ENCODE measurements at regions of chr12 and their contacts with region 1.

Region 1: DNA sequence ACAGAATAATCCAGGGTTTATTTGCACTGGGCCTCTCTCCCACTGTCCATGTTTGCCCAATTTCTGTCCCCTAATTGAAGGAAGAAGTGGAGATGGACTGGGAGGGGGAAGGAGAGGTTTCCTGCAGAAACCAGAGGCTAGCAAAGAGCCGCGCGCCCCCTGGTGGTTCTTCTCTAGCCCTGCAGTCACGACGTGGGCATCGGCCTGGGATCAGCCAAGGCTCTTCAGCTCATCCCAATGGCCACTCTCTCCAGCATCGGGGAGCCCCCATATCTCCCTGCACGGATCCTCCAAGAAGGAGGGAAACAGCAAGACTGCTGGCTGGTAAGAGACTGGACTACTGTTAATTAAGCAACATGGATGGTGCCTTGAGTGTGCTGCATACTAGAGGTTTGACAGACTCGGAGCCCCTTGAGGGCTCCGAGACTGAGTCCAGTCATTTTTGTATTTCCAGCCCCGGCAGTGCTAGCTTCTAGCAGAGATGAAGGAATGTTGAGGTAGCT is 18.7 kb downstream of the ZBTB39 start:
- DNase-seq: peak; percentile 53 to 86 (median 68)
- ATAC-seq: peak; percentile 86
- H3K4me3 ChIP-seq: no peak overlapping the region
- H3K4me3 Mint-ChIP-seq: no peak overlapping the region
- H3K27ac ChIP-seq: no peak overlapping the region
- H3K27ac Mint-ChIP-seq: no peak overlapping the region
- H3K4me1 ChIP-seq: peaks cover 18% of the 10 kb centered on the region
- H3K4me1 Mint-ChIP-seq: peaks cover 14% of the 10 kb centered on the region
- H3K27me3 ChIP-seq: no peaks in the 10 kb centered on the region
- H3K27me3 Mint-ChIP-seq: no peaks in the 10 kb centered on the region
- CTCF ChIP-seq: peak; percentile 82

Region 2: DNA sequence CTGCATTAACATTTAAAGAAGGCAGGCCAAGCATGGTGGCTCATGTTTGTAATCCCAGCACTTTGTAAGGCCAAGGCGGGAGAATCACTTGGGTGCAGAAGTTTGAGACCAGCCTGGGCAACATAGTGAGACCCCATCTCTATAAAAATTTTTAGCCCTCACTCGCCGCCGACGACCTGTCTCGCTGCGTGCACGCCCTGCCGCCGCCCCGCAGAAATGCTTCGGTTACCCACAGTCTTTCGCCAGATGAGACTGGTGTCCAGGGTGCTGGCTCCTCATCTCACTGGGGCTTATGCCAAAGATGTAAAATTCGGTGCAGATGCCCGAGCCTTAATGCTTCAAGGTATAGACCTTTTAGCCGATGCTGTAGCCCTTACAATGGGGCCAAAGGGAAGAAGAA is 476.8 kb before region 1 on chr12:
- CTCF ChIA-PET with region 1: no interaction called
- POLR2A ChIA-PET with region 1: no interaction called
- intact Hi-C with region 1: loop called (anchors 2 to 5 kb)
- DNase-seq: no peak
- ATAC-seq: no peak
- H3K4me3 ChIP-seq: no peak overlapping the region
- H3K4me3 Mint-ChIP-seq: no peak overlapping the region
- H3K27ac ChIP-seq: no peak overlapping the region
- H3K27ac Mint-ChIP-seq: no peak overlapping the region
- H3K4me1 ChIP-seq: no peaks in the 10 kb centered on the region
- H3K4me1 Mint-ChIP-seq: peaks cover 5% of the 10 kb centered on the region
- H3K27me3 ChIP-seq: no peaks in the 10 kb centered on the region
- H3K27me3 Mint-ChIP-seq: peaks cover 15% of the 10 kb centered on the region
- CTCF ChIP-seq: no peak

Region 3: DNA sequence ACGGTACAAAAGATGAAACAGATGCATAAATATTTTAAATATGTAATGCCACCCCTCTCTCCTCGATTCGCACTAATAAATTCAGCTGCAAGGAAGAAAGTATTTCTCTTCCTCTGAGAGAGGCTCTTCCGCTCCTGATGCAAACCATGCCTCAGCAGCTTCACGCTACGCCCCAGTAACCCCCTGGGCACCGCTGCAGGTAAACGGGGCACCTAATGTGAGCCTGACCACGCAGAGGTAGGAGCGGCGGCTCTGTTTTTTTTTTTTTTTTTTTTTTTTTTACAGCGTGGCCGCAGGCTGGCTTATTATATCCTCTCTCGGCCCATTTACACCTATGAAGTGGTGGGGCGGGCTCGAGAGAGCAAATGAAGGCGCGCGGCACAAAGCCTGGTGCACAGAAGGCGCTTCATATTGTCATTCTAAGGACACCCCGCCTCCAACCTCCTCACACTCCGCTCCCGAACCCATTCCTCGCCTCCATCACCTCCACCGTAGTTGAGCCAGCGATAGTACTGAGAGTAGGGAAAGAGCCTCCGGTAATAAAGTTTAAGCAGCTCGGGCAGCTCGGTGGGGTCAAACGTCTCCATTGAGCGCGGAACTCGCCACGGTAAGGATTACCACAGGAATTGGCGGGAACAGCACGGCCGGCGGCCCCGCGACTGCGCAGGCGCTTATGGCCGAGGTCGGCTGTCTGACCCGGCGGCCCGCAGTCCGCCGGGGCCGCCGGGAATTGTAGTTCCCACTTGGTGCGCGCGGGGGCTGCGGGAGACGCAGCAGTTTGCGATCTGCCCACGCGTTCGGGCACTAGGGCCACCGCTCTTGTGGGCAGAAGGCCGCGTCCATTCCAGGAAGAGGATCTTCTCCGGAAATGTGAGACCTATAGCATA is 235.6 kb before region 1 on chr12 and contains the start of gene PRIM1:
- CTCF ChIA-PET with region 1: interaction called, 7 read pairs
- POLR2A ChIA-PET with region 1: no interaction called
- intact Hi-C with region 1: loop called (anchors 1 kb)
- DNase-seq: peak; percentile 66 to 91 (median 78)
- ATAC-seq: peak; percentile 80
- H3K4me3 ChIP-seq: peak within 1 kb of the TSS; percentile 96
- H3K4me3 Mint-ChIP-seq: peak within 1 kb of the TSS; percentile 98
- H3K27ac ChIP-seq: peak within 1 kb of the TSS; percentile 68 to 80
- H3K27ac Mint-ChIP-seq: peak within 1 kb of the TSS; percentile 95
- H3K4me1 ChIP-seq: peaks cover 10% of the 10 kb centered on the region
- H3K4me1 Mint-ChIP-seq: peaks cover 33% of the 10 kb centered on the region
- H3K27me3 ChIP-seq: no peaks in the 10 kb centered on the region
- H3K27me3 Mint-ChIP-seq: no peaks in the 10 kb centered on the region
- CTCF ChIP-seq: peak; percentile 41
- total RNA-seq, gene PRIM1: 5.3 to 6.1 TPM

Region 4: GRCh38 chr12:56839915-56840325 is 147.7 kb before region 1 on chr12:
- CTCF ChIA-PET with region 1: no interaction called
- POLR2A ChIA-PET with region 1: no interaction called
- intact Hi-C with region 1: loop called in 1 of 2 experiments (anchors 5 kb)
- DNase-seq: peak in 7 of 14 experiments; percentile 6 to 38 (median 25)
- ATAC-seq: no peak
- H3K4me3 ChIP-seq: no peak overlapping the region
- H3K4me3 Mint-ChIP-seq: no peak overlapping the region
- H3K27ac ChIP-seq: no peak overlapping the region
- H3K27ac Mint-ChIP-seq: no peak overlapping the region
- H3K4me1 ChIP-seq: peaks cover 11% of the 10 kb centered on the region
- H3K4me1 Mint-ChIP-seq: peaks cover 15% of the 10 kb centered on the region
- H3K27me3 ChIP-seq: no peaks in the 10 kb centered on the region
- H3K27me3 Mint-ChIP-seq: no peaks in the 10 kb centered on the region
- CTCF ChIP-seq: no peak

Measured in CD4-positive, alpha-beta T cell (primary cell).